ENCODE measurements at regions of chr10 and their contacts with region 1.

Region 1: GRCh38 chr10:124418726-124419501 is at the start of gene OAT:
- DNase-seq: peak; percentile 96 to 98
- ATAC-seq: peak; percentile 97 to 99 (median 98)
- H3K4me3 ChIP-seq: peak within 1 kb of the TSS; percentile 58
- H3K4me3 Mint-ChIP-seq: peak within 1 kb of the TSS; percentile 79
- H3K27ac ChIP-seq: peak within 1 kb of the TSS; percentile 57
- H3K27ac Mint-ChIP-seq: peak within 1 kb of the TSS; percentile 21 to 80
- H3K4me1 ChIP-seq: peaks cover 14% of the 10 kb centered on the region
- H3K4me1 Mint-ChIP-seq: peaks cover 0 to 5% of the 10 kb centered on the region in 2 donors
- H3K27me3 ChIP-seq: no peaks in the 10 kb centered on the region
- H3K27me3 Mint-ChIP-seq: peaks cover 8 to 10% of the 10 kb centered on the region in 2 donors
- CTCF ChIP-seq: peak; percentile 14
- total RNA-seq, gene OAT: 35.8 to 60.9 (median 48.4) TPM

Region 2: DNA sequence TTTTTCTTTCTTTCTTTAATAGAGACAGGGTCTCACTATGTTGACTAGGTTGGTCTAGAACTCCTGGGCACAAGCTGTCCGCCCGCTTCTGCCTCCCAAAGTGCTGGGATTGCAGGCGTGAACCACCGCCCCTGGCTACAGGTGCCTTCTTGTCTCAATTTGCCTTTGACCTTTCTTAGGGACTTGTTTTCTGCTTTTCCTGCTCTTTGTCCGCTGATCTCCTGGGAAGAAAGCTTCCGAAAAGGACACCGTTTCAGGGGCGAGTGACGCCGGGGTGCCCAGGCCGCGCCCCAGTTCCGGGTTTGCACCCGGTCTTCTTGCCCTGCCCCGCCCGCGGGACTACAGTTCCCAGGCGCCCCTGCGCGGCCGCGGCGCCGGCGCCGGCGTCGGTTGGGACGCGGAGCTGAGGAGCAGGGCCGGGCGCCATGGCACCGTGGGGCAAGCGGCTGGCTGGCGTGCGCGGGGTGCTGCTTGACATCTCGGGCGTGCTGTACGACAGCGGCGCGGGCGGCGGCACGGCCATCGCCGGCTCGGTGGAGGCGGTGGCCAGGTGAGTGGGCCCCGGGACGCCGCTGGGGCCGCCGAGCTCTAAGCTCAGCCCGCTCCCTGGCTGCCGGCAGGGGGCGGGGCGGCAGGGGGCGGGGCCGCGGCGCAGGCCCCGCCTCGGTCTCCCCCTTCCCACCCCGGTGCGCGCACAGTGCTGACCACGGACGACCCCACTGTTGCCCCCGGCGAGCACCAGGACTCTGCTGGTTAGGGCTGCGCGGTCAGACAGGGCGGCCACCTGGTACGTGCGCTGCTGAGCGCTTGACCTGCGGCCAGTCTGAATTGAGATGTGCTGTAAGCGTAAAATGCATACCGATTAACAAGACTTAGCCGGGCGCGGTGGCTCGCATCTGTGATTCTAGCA is 42.8 kb after region 1 on chr10 and contains the start of gene LHPP:
- intact Hi-C with region 1: loop called (anchors 5 kb)
- DNase-seq: peak; percentile 87 to 91
- ATAC-seq: peak; percentile 95 to 97 (median 97)
- H3K4me3 ChIP-seq: peak within 1 kb of the TSS; percentile 55
- H3K4me3 Mint-ChIP-seq: peak within 1 kb of the TSS; percentile 97
- H3K27ac ChIP-seq: peak within 1 kb of the TSS; percentile 85
- H3K27ac Mint-ChIP-seq: peak within 1 kb of the TSS; percentile 77 to 90
- H3K4me1 ChIP-seq: peaks cover 17% of the 10 kb centered on the region
- H3K4me1 Mint-ChIP-seq: peaks cover 5 to 18% of the 10 kb centered on the region in 2 donors
- H3K27me3 ChIP-seq: no peaks in the 10 kb centered on the region
- H3K27me3 Mint-ChIP-seq: peaks cover 7 to 10% of the 10 kb centered on the region in 2 donors
- CTCF ChIP-seq: peak; percentile 38
- total RNA-seq, gene LHPP: 12.3 to 19.3 (median 14.8) TPM

Region 3: GRCh38 chr10:124849111-124849773 is 430.3 kb after region 1 on chr10:
- intact Hi-C with region 1: no loop called
- DNase-seq: no peak
- ATAC-seq: no peak
- H3K4me3 ChIP-seq: no peak overlapping the region
- H3K4me3 Mint-ChIP-seq: no peak overlapping the region
- H3K27ac ChIP-seq: no peak overlapping the region
- H3K27ac Mint-ChIP-seq: no peak overlapping the region
- H3K4me1 ChIP-seq: no peaks in the 10 kb centered on the region
- H3K4me1 Mint-ChIP-seq: no peaks in the 10 kb centered on the region
- H3K27me3 ChIP-seq: no peaks in the 10 kb centered on the region
- H3K27me3 Mint-ChIP-seq: no peaks in the 10 kb centered on the region
- CTCF ChIP-seq: no peak

Measured in natural killer cell (primary cell).